Transverse colon (tissue), 4 donors: ENCODE measurements at regions of chr13 and their contacts with region 1.

Region 1: GRCh38 chr13:49300739-49301589 is 53.2 kb downstream of the CDADC1 start:
- DNase-seq: peak; percentile 64
- H3K4me3 ChIP-seq: peak overlapping the region in 3 of 4 donors; percentile 5 to 46 (median 18)
- H3K27ac ChIP-seq: peak overlapping the region in 3 of 4 donors; percentile 29 to 59 (median 53)
- H3K4me1 ChIP-seq: peaks cover 4 to 6% (median 5%) of the 10 kb centered on the region in 4 donors
- H3K27me3 ChIP-seq: no peaks in the 10 kb centered on the region
- CTCF ChIP-seq: peak; percentile 82 to 96 (median 87)
- EP300 ChIP-seq: no peak
- POLR2A ChIP-seq: no peak

Region 2: DNA sequence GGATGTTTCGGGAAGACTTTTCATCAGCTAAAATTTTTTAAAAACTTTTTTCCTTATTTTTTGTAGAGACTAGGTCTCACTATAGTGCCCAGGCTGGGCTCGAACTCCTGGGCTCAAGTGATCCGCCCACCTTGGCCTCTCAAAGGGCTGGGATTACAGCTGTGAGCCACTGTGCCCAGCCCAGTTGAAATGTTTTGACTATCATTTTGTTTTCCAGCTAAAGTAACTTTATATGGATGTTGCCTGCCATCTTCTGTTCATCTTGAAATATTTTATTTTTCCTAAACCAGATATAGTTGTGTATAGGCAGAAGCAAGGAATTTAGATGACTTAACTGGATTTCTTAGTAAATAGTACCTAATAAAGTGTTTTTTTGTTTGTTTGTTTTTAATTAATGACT is 135.9 kb after region 1 on chr13:
- in situ Hi-C with region 1: loop called (anchors 5 to 25 kb)
- intact Hi-C with region 1: loop called (anchors 1 kb)
- DNase-seq: no peak
- H3K4me3 ChIP-seq: no peak overlapping the region
- H3K27ac ChIP-seq: peak overlapping the region in 3 of 4 donors; percentile 0 to 39 (median 19)
- H3K4me1 ChIP-seq: peaks cover 0 to 4% (median 0%) of the 10 kb centered on the region in 4 donors
- H3K27me3 ChIP-seq: no peaks in the 10 kb centered on the region
- CTCF ChIP-seq: peak in 4 of 5 experiments; percentile 13 to 36 (median 20)
- EP300 ChIP-seq: no peak
- POLR2A ChIP-seq: no peak

Region 3: DNA sequence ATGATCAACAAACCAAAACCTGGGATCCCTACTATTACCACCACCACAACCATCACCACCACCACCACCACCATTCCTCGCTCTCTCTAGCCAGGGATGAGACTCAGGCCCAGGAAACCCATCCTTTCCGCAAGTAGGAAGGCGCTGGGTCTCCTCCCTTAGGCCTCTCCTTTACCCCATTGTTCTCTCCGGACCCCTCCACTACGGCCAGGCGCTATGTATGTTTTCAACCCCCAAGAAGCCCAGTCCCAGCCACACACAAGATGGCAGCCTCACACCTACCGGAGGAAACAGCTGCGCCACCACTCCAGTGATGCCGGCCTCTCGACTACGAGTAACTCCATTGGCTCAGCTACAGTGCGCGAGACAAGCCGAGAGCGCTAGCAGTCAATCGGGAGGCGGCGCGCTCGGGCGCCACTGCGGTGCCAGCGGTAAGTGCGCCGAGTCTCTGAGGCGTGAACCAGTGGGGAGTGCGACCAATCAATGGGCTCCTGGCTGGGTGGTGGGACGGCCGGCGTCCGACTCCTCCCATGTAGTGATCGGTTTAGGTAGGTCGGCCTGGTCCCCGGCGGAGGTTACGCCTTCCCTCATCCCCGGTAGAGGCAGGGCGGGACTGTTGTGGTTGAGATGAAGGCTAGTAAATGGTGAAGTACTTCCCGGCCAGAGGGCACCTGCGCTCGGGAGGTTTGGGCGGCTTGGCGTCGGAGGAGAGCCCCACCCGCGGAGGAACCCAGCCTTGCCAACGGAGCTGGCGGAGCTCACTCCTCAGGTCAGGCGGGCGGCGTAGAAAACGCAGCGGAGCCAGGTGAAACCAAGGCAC is 142.9 kb after region 1 on chr13 and contains the starts of genes CAB39L and SETDB2:
- in situ Hi-C with region 1: loop called (anchors 5 to 25 kb)
- intact Hi-C with region 1: no loop called
- DNase-seq: peak; percentile 99
- H3K4me3 ChIP-seq: peak within 1 kb of the TSS; percentile 71 to 83 (median 75)
- H3K27ac ChIP-seq: peak within 1 kb of the TSS; percentile 96 to 98 (median 96)
- H3K4me1 ChIP-seq: peaks cover 0 to 46% (median 17%) of the 10 kb centered on the region in 4 donors
- H3K27me3 ChIP-seq: no peaks in the 10 kb centered on the region
- CTCF ChIP-seq: peak; percentile 16 to 76 (median 43)
- EP300 ChIP-seq: no peak
- POLR2A ChIP-seq: peak; percentile 93
- total RNA-seq, gene CAB39L: 23.5 to 36.7 (median 25.4) TPM
- total RNA-seq, gene SETDB2: 2.8 to 11.6 (median 8.8) TPM

Region 4: DNA sequence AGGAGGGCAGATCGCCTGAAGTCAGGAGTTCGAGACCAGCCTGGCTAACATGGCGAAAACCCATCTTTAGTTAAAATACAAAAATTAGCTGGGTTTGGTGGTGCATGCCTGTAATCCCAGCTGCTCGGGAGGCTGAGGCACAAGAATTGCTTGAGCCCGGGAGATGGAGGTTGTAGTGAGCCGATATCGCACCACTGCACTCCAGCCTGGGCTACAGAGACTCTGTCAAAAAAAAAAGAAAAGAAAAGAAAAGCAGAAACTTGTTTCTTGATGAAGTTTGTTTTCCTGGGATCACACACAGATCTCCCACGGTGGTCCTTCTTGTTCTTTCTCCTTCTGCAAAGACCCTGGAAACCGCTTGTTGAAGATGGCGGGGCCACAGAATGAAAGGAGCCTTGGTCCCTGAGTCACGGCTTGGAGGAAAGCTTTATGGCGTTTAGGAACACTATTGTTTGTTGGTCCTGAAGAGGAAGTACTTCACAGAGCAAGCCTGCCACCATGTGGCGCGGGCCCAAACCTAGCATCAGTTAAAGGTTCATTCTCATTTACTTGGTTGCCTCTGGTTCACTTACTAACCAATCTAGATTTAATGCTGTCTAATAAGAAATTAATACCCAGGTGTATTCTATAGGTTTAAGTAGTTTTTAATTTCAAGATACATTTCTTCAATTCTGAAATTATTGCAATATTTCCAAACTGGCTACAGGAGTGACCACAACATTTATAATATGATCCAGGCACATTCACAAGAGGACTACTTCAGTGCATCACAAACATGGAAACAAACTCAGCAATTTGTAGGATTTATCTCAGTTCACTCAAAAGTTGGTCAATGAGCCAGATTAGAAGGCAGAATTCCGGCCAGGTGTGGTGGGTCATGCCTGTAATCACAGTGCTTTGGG is 306.0 kb after region 1 on chr13:
- in situ Hi-C with region 1: loop called (anchors 5 to 25 kb)
- intact Hi-C with region 1: loop called (anchors 10 kb)
- DNase-seq: peak; percentile 88
- H3K4me3 ChIP-seq: peak overlapping the region in 3 of 4 donors; percentile 13 to 43 (median 19)
- H3K27ac ChIP-seq: no peak overlapping the region
- H3K4me1 ChIP-seq: peaks cover 0 to 14% (median 0%) of the 10 kb centered on the region in 4 donors
- H3K27me3 ChIP-seq: no peaks in the 10 kb centered on the region
- CTCF ChIP-seq: peak; percentile 64 to 82 (median 68)
- EP300 ChIP-seq: no peak
- POLR2A ChIP-seq: no peak